ENCODE measurements at regions of chr3 and their contacts with region 1.

Region 1: DNA sequence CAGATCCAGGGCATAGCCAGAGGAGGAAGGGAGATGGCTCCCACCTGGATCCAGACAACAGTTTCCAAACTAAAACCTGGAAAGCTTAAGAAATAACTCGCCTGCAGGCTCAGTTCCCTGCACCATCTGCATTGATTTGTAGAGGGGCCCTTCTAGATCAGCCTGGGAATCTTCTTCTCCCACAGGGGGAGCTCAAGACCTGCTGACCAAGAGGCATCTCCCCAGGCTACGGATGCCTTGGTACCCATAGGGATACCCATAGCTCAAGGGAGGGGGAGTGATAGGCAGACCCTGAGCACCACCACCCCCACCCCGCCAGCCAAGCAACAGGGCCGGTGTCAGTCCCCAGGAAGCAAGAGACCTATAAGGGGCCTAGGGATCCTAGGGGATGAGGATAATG is 28.0 kb upstream of the DCLK3 start:
- DNase-seq: peak; percentile 67
- ATAC-seq: peak; percentile 93
- H3K4me3 ChIP-seq: no peak overlapping the region
- H3K27ac ChIP-seq: no peak overlapping the region
- H3K4me1 ChIP-seq: no peaks in the 10 kb centered on the region
- H3K27me3 ChIP-seq: peaks cover 22% of the 10 kb centered on the region; the same call in 1 of the 2 replicates
- CTCF ChIP-seq: peak; percentile 73

Region 2: DNA sequence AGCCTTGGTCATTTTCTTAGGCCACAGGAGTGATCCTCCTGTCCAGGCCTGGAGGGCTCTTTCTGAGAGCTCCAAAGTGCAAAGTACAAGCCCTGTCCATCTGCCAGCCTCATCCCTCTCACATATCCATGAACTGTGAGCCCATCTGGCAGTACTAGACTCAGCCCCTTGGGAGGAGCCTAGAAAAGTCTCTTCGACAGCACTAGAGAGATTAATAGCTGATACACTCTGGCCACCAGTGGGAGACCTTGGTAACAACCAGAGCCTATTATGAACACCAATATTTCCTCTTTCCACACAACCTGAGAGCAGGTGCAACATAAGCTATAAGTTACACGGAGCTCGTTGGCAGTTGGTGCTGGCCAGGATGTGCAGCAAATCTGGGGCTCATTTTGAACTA is 31.5 kb after region 1 on chr3:
- CTCF ChIA-PET with region 1: no interaction called
- POLR2A ChIA-PET with region 1: no interaction called
- intact Hi-C with region 1: no loop called
- DNase-seq: no peak
- ATAC-seq: no peak
- H3K4me3 ChIP-seq: no peak overlapping the region
- H3K27ac ChIP-seq: no peak overlapping the region
- H3K4me1 ChIP-seq: no peaks in the 10 kb centered on the region
- H3K27me3 ChIP-seq: peaks cover 11% of the 10 kb centered on the region; the same call in 1 of the 2 replicates
- CTCF ChIP-seq: no peak

Region 3: GRCh38 chr3:36868614-36869436 is 76.5 kb after region 1 on chr3:
- CTCF ChIA-PET with region 1: interaction called, 9 read pairs
- POLR2A ChIA-PET with region 1: no interaction called
- intact Hi-C with region 1: loop called (anchors 1 kb)
- DNase-seq: peak; percentile 73
- ATAC-seq: peak; percentile 79
- H3K4me3 ChIP-seq: no peak overlapping the region
- H3K27ac ChIP-seq: no peak overlapping the region
- H3K4me1 ChIP-seq: no peaks in the 10 kb centered on the region
- H3K27me3 ChIP-seq: no peaks in the 10 kb centered on the region
- CTCF ChIP-seq: peak; percentile 86

Measured in PC-3 (cell line).